ENCODE measurements at regions of chr7 and their contacts with region 1.

Region 1: GRCh38 chr7:29189743-29190201 is 4.8 kb upstream of the CHN2 start:
- DNase-seq: peak; percentile 75
- ATAC-seq: peak; percentile 72
- H3K4me3 Mint-ChIP-seq: no peak overlapping the region
- H3K27ac Mint-ChIP-seq: no peak overlapping the region
- H3K4me1 Mint-ChIP-seq: no peaks in the 10 kb centered on the region
- H3K27me3 Mint-ChIP-seq: peaks cover 17% of the 10 kb centered on the region
- CTCF ChIP-seq: peak; percentile 87

Region 2: DNA sequence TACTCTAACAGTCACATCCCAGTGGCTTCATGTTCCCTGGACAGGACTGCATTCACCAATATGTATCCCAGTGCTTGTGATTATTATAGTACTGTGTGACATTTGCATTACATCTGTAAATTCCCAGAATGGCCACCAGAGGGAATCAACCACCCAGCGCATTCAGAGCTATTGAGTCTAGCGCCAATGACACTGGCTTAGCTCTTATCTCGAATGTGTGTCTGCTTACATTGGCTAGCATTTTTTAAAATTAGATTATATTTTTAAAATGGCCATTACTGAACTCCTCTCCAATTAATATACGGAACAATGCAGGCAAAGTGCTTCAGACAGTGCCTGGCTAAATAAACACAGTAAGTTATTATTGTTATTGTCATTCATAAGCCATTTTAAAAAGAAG is 267.9 kb before region 1 on chr7:
- CTCF ChIA-PET with region 1: interaction called, 17 read pairs
- POLR2A ChIA-PET with region 1: no interaction called
- intact Hi-C with region 1: no loop called
- DNase-seq: peak; percentile 53
- ATAC-seq: peak; percentile 85
- H3K4me3 Mint-ChIP-seq: no peak overlapping the region
- H3K27ac Mint-ChIP-seq: no peak overlapping the region
- H3K4me1 Mint-ChIP-seq: peaks cover 13% of the 10 kb centered on the region
- H3K27me3 Mint-ChIP-seq: peaks cover 5% of the 10 kb centered on the region
- CTCF ChIP-seq: peak; percentile 74

Region 3: DNA sequence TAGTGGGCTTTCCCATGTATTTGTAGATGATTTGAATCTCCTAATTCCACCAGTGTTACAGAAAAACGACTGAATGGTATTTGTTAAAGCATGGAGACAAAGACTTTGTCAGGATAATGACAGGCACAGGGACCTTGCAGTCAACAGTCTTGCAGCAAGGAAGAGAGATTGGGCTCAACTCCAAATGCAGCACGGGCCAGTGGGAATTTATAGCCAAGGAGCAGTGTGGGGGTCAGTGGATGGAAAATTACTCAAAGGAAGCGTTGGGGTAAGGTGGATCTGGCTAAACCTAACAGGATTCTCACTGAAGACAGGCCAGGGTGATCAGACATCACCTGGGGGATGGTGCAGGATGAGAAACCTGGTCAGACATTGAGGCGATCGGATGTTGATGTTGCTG is 67.7 kb before region 1 on chr7:
- CTCF ChIA-PET with region 1: no interaction called
- POLR2A ChIA-PET with region 1: no interaction called
- intact Hi-C with region 1: no loop called
- DNase-seq: no peak
- ATAC-seq: no peak
- H3K4me3 Mint-ChIP-seq: no peak overlapping the region
- H3K27ac Mint-ChIP-seq: no peak overlapping the region
- H3K4me1 Mint-ChIP-seq: no peaks in the 10 kb centered on the region
- H3K27me3 Mint-ChIP-seq: peaks cover 3% of the 10 kb centered on the region
- CTCF ChIP-seq: no peak

Region 4: GRCh38 chr7:29147821-29148220 is 42.0 kb before region 1 on chr7:
- CTCF ChIA-PET with region 1: interaction called, 11 read pairs
- POLR2A ChIA-PET with region 1: no interaction called
- intact Hi-C with region 1: no loop called
- DNase-seq: no peak
- ATAC-seq: no peak
- H3K4me3 Mint-ChIP-seq: no peak overlapping the region
- H3K27ac Mint-ChIP-seq: no peak overlapping the region
- H3K4me1 Mint-ChIP-seq: peaks cover 6% of the 10 kb centered on the region
- H3K27me3 Mint-ChIP-seq: peaks cover 30% of the 10 kb centered on the region
- CTCF ChIP-seq: no peak

Region 5: GRCh38 chr7:29177963-29178600 is 11.7 kb before region 1 on chr7:
- CTCF ChIA-PET with region 1: interaction called, 51 read pairs
- POLR2A ChIA-PET with region 1: interaction called, 3 read pairs
- intact Hi-C with region 1: no loop called
- DNase-seq: peak; percentile 57
- ATAC-seq: peak; percentile 83
- H3K4me3 Mint-ChIP-seq: peak overlapping the region; percentile 1
- H3K27ac Mint-ChIP-seq: no peak overlapping the region
- H3K4me1 Mint-ChIP-seq: peaks cover 7% of the 10 kb centered on the region
- H3K27me3 Mint-ChIP-seq: peaks cover 12% of the 10 kb centered on the region
- CTCF ChIP-seq: no peak

Region 6: GRCh38 chr7:29217113-29217512 is 27.3 kb after region 1 on chr7:
- CTCF ChIA-PET with region 1: interaction called, 10 read pairs
- POLR2A ChIA-PET with region 1: no interaction called
- intact Hi-C with region 1: no loop called
- DNase-seq: no peak
- ATAC-seq: no peak
- H3K4me3 Mint-ChIP-seq: no peak overlapping the region
- H3K27ac Mint-ChIP-seq: no peak overlapping the region
- H3K4me1 Mint-ChIP-seq: no peaks in the 10 kb centered on the region
- H3K27me3 Mint-ChIP-seq: peaks cover 2% of the 10 kb centered on the region
- CTCF ChIP-seq: no peak

Region 7: GRCh38 chr7:29337546-29338116 is 147.9 kb after region 1 on chr7:
- CTCF ChIA-PET with region 1: interaction called, 10 read pairs
- POLR2A ChIA-PET with region 1: no interaction called
- intact Hi-C with region 1: no loop called
- DNase-seq: peak; percentile 47
- ATAC-seq: peak; percentile 91
- H3K4me3 Mint-ChIP-seq: peak overlapping the region; percentile 27
- H3K27ac Mint-ChIP-seq: peak overlapping the region; percentile 66
- H3K4me1 Mint-ChIP-seq: peaks cover 39% of the 10 kb centered on the region
- H3K27me3 Mint-ChIP-seq: no peaks in the 10 kb centered on the region
- CTCF ChIP-seq: no peak

Region 8: GRCh38 chr7:29408841-29409243 is 219.1 kb after region 1 on chr7:
- CTCF ChIA-PET with region 1: interaction called, 83 read pairs
- POLR2A ChIA-PET with region 1: no interaction called
- intact Hi-C with region 1: loop called (anchors 2 kb)
- DNase-seq: peak; percentile 62
- ATAC-seq: peak; percentile 67
- H3K4me3 Mint-ChIP-seq: no peak overlapping the region
- H3K27ac Mint-ChIP-seq: no peak overlapping the region
- H3K4me1 Mint-ChIP-seq: no peaks in the 10 kb centered on the region
- H3K27me3 Mint-ChIP-seq: no peaks in the 10 kb centered on the region
- CTCF ChIP-seq: peak; percentile 83